ENCODE measurements at regions of chr1 and their contacts with region 1.

Region 1: DNA sequence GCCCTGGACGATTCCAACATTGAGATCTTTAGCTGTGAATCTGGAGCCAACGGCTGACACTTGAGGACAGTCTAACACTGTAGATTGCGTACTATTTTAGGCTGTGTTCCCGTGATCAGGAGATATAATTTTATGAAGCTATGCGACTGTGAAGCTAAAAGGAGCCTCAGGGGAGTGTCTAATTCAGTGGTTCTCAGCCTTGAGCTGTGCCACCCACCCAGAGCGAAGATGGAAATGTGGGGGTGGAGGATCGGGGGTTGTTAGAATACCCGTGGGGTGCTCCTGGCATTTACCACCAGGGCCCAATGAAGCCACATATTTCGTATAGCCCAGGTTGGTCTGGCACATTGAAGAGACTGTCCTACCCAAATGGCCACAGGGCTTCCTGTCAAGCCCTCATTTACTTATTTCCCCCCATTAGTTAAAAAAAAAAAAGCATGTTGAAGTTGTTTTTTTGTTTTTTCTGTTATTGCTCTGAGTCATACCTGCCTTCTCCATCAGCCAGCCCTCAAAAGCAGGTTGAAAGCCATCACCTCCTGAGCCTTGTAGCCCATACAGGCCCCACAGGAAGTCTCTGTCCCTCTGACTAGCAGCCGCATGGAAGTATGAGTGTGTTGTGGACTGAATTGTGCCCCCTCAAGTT is 141.7 kb downstream of the GALNT2 start:
- DNase-seq: no peak
- H3K4me3 Mint-ChIP-seq: peak overlapping the region; percentile 76
- H3K27ac Mint-ChIP-seq: peak overlapping the region; percentile 99
- H3K4me1 Mint-ChIP-seq: peaks cover 72% of the 10 kb centered on the region
- H3K27me3 Mint-ChIP-seq: no peaks in the 10 kb centered on the region

Region 2: DNA sequence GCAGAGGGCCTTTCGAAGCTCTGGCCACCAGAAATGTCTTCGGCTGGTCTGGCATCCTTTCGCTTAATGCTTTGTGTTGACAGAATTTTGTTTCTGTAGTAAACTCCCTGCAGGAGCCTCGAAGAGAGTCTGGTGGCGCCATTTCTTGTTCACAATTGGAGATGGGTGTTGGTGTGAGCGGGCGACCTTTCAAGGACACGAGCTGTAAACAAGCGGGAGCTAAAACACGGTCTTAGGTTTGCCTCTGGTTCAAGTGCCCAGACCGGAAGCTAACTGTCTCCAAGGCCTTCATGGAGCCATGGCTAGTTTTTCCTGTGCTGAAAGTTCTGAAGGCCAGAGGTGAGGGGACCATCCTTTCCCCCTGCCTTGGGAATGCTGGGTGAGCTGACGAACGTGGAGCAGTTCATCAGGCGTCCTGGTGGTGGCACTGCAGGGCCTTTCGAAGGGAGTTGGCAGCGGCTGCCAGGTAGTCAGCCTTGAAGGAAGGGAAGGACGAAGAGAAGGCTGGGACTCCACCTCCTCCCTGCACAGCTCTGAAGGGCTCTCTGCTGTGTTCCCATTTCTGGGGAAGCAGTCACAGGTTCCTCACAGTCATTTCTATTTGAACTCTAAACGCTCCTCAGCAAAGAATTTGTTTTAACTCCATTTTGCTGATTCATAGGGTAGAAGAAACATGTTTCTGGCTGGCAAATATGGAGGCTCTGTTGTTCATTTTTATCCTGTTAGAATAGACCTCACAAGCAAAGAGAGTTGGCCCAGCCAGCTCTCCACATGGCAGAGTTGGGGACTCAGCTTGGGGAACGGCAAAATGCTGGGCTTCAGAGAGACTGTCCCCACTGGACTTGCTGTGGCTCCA is 547.5 kb before region 1 on chr1:
- intact Hi-C with region 1: loop called (anchors 5 kb)
- DNase-seq: peak; percentile 41
- H3K4me3 Mint-ChIP-seq: no peak overlapping the region
- H3K27ac Mint-ChIP-seq: no peak overlapping the region
- H3K4me1 Mint-ChIP-seq: peaks cover 10% of the 10 kb centered on the region
- H3K27me3 Mint-ChIP-seq: peaks cover 2% of the 10 kb centered on the region

Region 3: GRCh38 chr1:230109895-230110667 is 98.7 kb before region 1 on chr1:
- intact Hi-C with region 1: loop called (anchors 1 kb)
- DNase-seq: peak; percentile 56
- H3K4me3 Mint-ChIP-seq: peak overlapping the region; percentile 23
- H3K27ac Mint-ChIP-seq: peak overlapping the region; percentile 88
- H3K4me1 Mint-ChIP-seq: peaks cover 78% of the 10 kb centered on the region
- H3K27me3 Mint-ChIP-seq: no peaks in the 10 kb centered on the region

Region 4: GRCh38 chr1:230186003-230186863 is 22.5 kb before region 1 on chr1:
- intact Hi-C with region 1: loop called (anchors 2 kb)
- DNase-seq: no peak
- H3K4me3 Mint-ChIP-seq: no peak overlapping the region
- H3K27ac Mint-ChIP-seq: peak overlapping the region; percentile 34
- H3K4me1 Mint-ChIP-seq: peaks cover 47% of the 10 kb centered on the region
- H3K27me3 Mint-ChIP-seq: no peaks in the 10 kb centered on the region

Region 5: GRCh38 chr1:230251644-230252191 is 43.0 kb after region 1 on chr1:
- intact Hi-C with region 1: loop called (anchors 1 kb)
- DNase-seq: no peak
- H3K4me3 Mint-ChIP-seq: no peak overlapping the region
- H3K27ac Mint-ChIP-seq: peak overlapping the region; percentile 85
- H3K4me1 Mint-ChIP-seq: peaks cover 19% of the 10 kb centered on the region
- H3K27me3 Mint-ChIP-seq: no peaks in the 10 kb centered on the region

Region 6: GRCh38 chr1:230303822-230304221 is 95.1 kb after region 1 on chr1:
- intact Hi-C with region 1: loop called (anchors 2 kb)
- DNase-seq: no peak
- H3K4me3 Mint-ChIP-seq: no peak overlapping the region
- H3K27ac Mint-ChIP-seq: peak overlapping the region; percentile 4
- H3K4me1 Mint-ChIP-seq: peaks cover 24% of the 10 kb centered on the region
- H3K27me3 Mint-ChIP-seq: no peaks in the 10 kb centered on the region

Measured in activated T-helper 2 cell treated with anti-CD3 and anti-CD28 coated beads, Interferon-gamma antibody, Interleukin-2, Interleukin-4, amounts not matched to agents 10 μg/mL and 5 μg/mL and 100 μg/mL, durations not matched to agents 14 hours and 24 hours and 36 hours (primary cell).